ENCODE measurements at regions of chr12 and their contacts with region 1.

Region 1: GRCh38 chr12:116080415-116080814 is 197.1 kb downstream of the MED13L start:
- DNase-seq: no peak
- H3K4me3 Mint-ChIP-seq: no peak overlapping the region
- H3K27ac Mint-ChIP-seq: no peak overlapping the region
- H3K4me1 Mint-ChIP-seq: peaks cover 10% of the 10 kb centered on the region
- H3K27me3 Mint-ChIP-seq: no peaks in the 10 kb centered on the region
- CTCF ChIP-seq: no peak

Region 2: DNA sequence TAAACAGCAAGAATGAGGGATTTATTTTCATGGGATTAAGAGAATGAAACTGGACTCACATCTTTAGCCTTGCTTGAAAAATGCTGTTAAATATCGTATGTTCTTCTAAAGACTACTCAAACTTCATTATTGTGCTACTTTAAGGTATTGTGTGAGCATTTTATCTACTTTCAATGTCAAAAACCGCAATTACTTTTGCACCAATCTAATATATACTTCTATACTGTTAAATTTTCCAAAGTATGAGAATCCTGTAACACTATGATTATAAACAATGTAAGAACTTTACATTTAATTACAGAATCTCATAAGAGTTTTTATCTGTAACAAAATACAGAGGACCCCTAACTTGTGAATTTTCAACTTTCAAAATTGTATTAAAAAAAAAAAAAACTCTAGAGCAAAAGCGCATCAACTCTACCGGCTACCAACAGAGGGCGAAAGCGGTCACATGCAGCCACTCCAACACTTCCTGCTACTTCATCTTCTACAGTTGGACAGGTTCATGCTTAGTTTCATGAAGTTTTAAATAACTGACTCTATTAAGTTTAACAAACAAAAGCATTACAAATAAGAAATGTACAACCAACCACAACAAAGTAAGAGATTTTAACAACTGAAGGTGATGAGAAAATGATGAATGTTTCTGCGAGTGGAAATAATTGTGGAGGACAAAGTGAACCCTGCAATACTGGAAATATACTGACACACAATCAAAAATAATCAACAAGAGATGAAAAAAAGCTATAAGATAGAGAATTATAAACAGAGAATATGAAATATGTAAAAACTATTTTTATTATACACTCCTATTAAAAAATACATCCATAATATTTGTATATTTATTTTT is 13.8 kb before region 1 on chr12:
- CTCF ChIA-PET with region 1: interaction called, 11 read pairs
- POLR2A ChIA-PET with region 1: interaction called, 4 read pairs
- intact Hi-C with region 1: no loop called
- DNase-seq: peak; percentile 55
- H3K4me3 Mint-ChIP-seq: no peak overlapping the region
- H3K27ac Mint-ChIP-seq: no peak overlapping the region
- H3K4me1 Mint-ChIP-seq: peaks cover 18% of the 10 kb centered on the region
- H3K27me3 Mint-ChIP-seq: no peaks in the 10 kb centered on the region
- CTCF ChIP-seq: peak; percentile 70

Region 3: GRCh38 chr12:117685110-117685926 is 1604.9 kb after region 1 on chr12:
- CTCF ChIA-PET with region 1: no interaction called
- POLR2A ChIA-PET with region 1: no interaction called
- intact Hi-C with region 1: no loop called
- DNase-seq: peak; percentile 73
- H3K4me3 Mint-ChIP-seq: peak overlapping the region; percentile 22
- H3K27ac Mint-ChIP-seq: no peak overlapping the region
- H3K4me1 Mint-ChIP-seq: peaks cover 23% of the 10 kb centered on the region
- H3K27me3 Mint-ChIP-seq: no peaks in the 10 kb centered on the region
- CTCF ChIP-seq: no peak

Measured in MCF 10A (cell line).